BJ (cell line): ENCODE measurements at regions of chr5 and their contacts with region 1.

Region 1: GRCh38 chr5:15834596-15835245 is 334.7 kb downstream of the FBXL7 start:
- DNase-seq: peak; percentile 61
- H3K4me3 ChIP-seq: no peak overlapping the region
- H3K27me3 ChIP-seq: no peaks in the 10 kb centered on the region
- CTCF ChIP-seq: no peak

Region 2: GRCh38 chr5:15821506-15821905 is 13.2 kb before region 1 on chr5:
- CTCF ChIA-PET with region 1: interaction called, 14 read pairs
- POLR2A ChIA-PET with region 1: interaction called, 4 read pairs
- DNase-seq: no peak
- H3K4me3 ChIP-seq: no peak overlapping the region
- H3K27me3 ChIP-seq: no peaks in the 10 kb centered on the region
- CTCF ChIP-seq: no peak